ENCODE measurements at regions of chr10 and their contacts with region 1.

Region 1: DNA sequence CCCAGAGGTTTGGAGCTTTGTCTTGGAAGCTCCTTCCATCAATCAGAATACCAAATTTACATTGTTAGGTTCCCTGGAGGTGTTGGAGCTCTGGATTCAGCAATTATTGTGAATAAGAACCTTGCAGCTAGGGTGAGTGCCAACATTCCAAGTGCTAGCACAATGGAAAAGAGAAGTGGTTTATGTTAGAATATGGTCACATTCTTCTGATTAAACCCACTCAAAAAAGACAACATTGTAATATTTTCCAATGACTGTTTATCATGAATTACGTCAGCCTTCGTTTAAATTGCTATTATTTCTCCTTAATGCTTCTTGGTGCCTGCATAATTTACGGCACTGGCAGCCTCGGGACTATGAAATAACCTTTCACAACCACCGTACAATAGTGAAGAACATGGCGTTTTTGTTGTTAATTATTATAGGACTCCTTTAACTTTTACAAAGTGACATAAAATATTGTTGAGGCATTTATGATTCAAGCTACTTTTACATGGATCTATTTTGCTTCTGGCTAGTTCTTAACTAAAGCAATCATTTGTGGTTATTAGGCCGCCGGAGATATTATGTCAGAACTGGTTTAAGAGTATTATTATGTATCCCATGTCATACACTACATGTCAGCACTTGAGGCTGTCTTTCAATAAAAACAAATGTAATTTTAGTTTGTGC is 117.7 kb downstream of the ARID5B start:
- DNase-seq: no peak
- ATAC-seq: no peak
- H3K4me3 Mint-ChIP-seq: peak overlapping the region; percentile 11
- H3K27ac Mint-ChIP-seq: peak overlapping the region; percentile 100
- H3K4me1 Mint-ChIP-seq: peaks cover 88% of the 10 kb centered on the region
- H3K27me3 Mint-ChIP-seq: no peaks in the 10 kb centered on the region

Region 2: DNA sequence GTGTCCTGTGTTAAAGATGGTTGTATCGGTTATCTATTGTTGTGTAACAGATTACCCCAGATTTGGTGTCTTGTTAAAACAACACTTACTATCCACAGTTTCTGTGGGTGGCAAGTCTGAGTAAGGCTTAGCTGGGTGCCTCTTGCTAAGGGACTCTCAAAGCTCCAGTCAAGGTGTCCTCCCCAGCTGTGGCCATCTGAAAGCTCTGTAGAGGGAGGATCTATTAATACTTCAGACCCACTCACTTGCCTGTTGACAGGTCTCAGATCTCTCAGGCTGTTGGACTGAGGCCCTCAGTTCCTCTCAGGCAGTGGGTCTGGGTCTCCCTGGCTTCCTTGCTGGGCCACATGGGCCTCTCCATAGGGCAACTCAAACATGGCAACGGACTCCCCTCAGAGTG is 98.0 kb before region 1 on chr10:
- CTCF ChIA-PET with region 1: no interaction called
- POLR2A ChIA-PET with region 1: no interaction called
- intact Hi-C with region 1: no loop called
- DNase-seq: no peak
- ATAC-seq: no peak
- H3K4me3 Mint-ChIP-seq: no peak overlapping the region
- H3K27ac Mint-ChIP-seq: no peak overlapping the region
- H3K4me1 Mint-ChIP-seq: peaks cover 63% of the 10 kb centered on the region
- H3K27me3 Mint-ChIP-seq: no peaks in the 10 kb centered on the region

Region 3: DNA sequence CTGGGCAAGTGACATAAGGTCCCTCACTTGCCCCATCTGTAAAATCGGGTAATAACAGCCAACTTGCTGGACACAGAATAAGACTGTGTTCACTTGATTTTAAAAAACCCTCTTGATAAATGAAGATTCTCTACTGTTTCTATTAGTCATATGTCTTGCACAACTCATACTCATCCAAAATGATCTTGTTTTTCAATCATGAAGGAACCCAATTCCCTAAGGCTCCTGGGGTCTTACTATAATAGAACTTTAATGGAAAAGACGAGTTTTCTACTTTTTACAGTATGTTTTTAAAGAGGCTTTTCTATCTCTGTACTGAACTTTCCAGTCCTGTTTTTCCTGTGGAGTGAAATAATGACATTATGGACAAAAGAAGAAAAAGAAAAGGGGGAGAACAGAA is 13.9 kb before region 1 on chr10:
- CTCF ChIA-PET with region 1: interaction called, 20 read pairs
- POLR2A ChIA-PET with region 1: interaction called, 6 read pairs
- intact Hi-C with region 1: no loop called
- DNase-seq: no peak
- ATAC-seq: no peak
- H3K4me3 Mint-ChIP-seq: no peak overlapping the region
- H3K27ac Mint-ChIP-seq: peak overlapping the region; percentile 52
- H3K4me1 Mint-ChIP-seq: peaks cover 86% of the 10 kb centered on the region
- H3K27me3 Mint-ChIP-seq: no peaks in the 10 kb centered on the region

Region 4: DNA sequence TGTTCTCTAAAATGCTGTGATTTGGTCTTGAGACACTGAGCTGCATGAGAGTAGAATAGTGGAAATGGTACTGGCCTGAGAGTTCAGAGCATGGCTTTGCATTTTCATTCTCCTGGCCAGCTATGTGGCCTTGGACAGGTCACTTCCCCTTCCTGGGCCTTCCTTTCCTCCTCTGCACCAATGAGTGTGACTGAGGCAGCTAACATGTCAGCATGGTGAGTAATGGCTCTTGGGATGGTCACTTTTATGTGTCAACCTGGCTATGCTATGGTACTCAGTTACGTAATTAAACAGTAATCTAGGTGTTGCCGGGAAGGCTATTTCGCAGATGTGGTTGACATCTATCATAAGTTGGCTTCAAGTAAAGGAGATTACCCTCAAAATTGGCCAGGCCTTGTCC is 140.2 kb after region 1 on chr10:
- CTCF ChIA-PET with region 1: no interaction called
- POLR2A ChIA-PET with region 1: no interaction called
- intact Hi-C with region 1: no loop called
- DNase-seq: no peak
- ATAC-seq: no peak
- H3K4me3 Mint-ChIP-seq: no peak overlapping the region
- H3K27ac Mint-ChIP-seq: no peak overlapping the region
- H3K4me1 Mint-ChIP-seq: peaks cover 4% of the 10 kb centered on the region
- H3K27me3 Mint-ChIP-seq: no peaks in the 10 kb centered on the region